ENCODE measurements at regions of chr11 and their contacts with region 1.

Region 1: GRCh38 chr11:126268708-126269579 is at the starts of genes FOXRED1 and SRPRA:
- DNase-seq: peak; percentile 96
- ATAC-seq: peak; percentile 96
- H3K4me3 ChIP-seq: peak within 1 kb of the TSS; percentile 93 to 100 (median 99)
- H3K27ac ChIP-seq: peak within 1 kb of the TSS; percentile 94
- H3K4me1 ChIP-seq: peaks cover 35% of the 10 kb centered on the region
- H3K27me3 ChIP-seq: no peaks in the 10 kb centered on the region; a peak in 1 of 5 replicates
- CTCF ChIP-seq: no peak
- EP300 ChIP-seq: peak in 1 of 2 experiments; percentile 46; a peak in 1 of 4 replicates
- POLR2A ChIP-seq: peak; percentile 81 to 86
- RAD21 ChIP-seq: no peak
- total RNA-seq, gene FOXRED1: 42.9 and 50.2 TPM in 2 replicates
- total RNA-seq, gene SRPRA: 16.4 and 27.7 TPM in 2 replicates

Region 2: DNA sequence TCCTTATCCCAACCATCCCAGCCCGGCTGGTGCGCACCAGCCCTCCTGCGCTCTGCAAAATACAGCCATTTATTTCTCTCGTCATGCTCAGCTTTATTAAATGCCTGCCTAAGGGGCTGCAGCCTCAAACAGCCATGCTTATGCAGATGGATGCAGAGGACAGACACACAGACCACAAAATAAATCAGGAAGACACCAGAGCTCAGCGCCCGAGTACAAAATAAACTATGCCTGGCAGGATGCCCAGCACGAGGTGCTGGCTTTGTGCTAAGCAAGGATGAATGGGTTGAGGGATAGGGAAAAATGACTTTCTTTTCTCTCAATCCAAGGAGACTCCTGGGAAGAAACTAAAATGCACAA is 128.0 kb before region 1 on chr11:
- CTCF ChIA-PET with region 1: no interaction called
- POLR2A ChIA-PET with region 1: no interaction called
- in situ Hi-C with region 1: no loop called
- intact Hi-C with region 1: no loop called
- DNase-seq: no peak
- ATAC-seq: no peak
- H3K4me3 ChIP-seq: no peak overlapping the region
- H3K27ac ChIP-seq: no peak overlapping the region
- H3K4me1 ChIP-seq: peaks cover 62% of the 10 kb centered on the region
- H3K27me3 ChIP-seq: peaks cover 0 to 7% of the 10 kb centered on the region in 2 experiments; a peak in 1 of 5 replicates
- CTCF ChIP-seq: no peak
- EP300 ChIP-seq: no peak
- POLR2A ChIP-seq: no peak
- RAD21 ChIP-seq: no peak

Region 3: DNA sequence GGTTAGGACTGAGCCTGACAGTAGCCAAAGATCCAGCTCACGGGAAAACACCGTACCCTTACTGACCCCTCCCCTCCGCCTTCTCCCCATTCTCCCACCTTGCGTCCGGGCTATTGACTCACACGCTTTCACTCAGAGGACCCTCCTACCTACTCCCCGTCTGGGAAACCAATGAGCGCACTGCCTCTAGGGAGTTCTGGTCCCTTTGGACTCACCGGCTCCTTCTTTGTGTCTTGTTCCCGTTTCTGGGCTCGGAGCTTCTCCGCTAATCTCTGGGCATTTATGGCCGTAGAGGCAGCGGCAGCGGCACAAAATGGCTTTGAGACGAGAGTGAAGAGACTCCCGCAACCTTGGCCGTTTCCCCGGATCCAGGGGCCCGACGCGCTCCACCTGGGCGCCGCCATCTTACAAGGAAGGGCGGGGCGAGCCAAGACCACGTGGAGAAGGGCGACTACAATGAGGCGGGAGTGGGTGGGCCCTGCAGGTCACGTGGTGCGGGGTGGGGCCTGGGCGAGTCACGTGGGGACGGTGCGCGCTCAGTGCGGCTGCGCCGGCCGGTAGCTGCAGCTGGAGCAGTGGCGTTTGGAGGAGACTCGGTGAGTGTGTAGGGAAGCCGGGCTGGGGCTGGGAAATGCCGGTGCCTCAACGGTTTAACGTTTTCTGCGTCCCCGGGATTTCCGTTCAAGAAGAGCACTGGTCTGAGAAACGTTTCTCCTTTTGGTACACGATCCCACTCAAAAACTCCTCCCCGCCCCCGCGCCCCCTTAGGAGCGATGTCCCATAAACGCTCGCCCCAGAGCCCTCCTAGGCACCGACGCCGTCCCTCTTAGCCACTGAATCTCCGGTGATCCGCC is 57.5 kb before region 1 on chr11 and contains the starts of genes FAM118B and RPUSD4:
- CTCF ChIA-PET with region 1: no interaction called
- POLR2A ChIA-PET with region 1: interaction called, 8 read pairs
- in situ Hi-C with region 1: no loop called
- intact Hi-C with region 1: loop called (anchors 2 kb)
- DNase-seq: peak; percentile 90
- ATAC-seq: peak; percentile 93
- H3K4me3 ChIP-seq: peak within 1 kb of the TSS; percentile 76 to 97 (median 90)
- H3K27ac ChIP-seq: peak within 1 kb of the TSS; percentile 82
- H3K4me1 ChIP-seq: peaks cover 42% of the 10 kb centered on the region
- H3K27me3 ChIP-seq: peaks cover 0 to 2% of the 10 kb centered on the region in 2 experiments; a peak in 1 of 5 replicates
- CTCF ChIP-seq: peak; percentile 26; the same call in 1 of the 2 replicates
- EP300 ChIP-seq: no peak
- POLR2A ChIP-seq: peak; percentile 87 to 91
- RAD21 ChIP-seq: 0 out of 2 replicates have a peak, but pooled peaks have one; percentile 6
- total RNA-seq, gene FAM118B: 25.7 and 30.9 TPM in 2 replicates
- total RNA-seq, gene RPUSD4: 45.0 and 45.6 TPM in 2 replicates

Region 4: DNA sequence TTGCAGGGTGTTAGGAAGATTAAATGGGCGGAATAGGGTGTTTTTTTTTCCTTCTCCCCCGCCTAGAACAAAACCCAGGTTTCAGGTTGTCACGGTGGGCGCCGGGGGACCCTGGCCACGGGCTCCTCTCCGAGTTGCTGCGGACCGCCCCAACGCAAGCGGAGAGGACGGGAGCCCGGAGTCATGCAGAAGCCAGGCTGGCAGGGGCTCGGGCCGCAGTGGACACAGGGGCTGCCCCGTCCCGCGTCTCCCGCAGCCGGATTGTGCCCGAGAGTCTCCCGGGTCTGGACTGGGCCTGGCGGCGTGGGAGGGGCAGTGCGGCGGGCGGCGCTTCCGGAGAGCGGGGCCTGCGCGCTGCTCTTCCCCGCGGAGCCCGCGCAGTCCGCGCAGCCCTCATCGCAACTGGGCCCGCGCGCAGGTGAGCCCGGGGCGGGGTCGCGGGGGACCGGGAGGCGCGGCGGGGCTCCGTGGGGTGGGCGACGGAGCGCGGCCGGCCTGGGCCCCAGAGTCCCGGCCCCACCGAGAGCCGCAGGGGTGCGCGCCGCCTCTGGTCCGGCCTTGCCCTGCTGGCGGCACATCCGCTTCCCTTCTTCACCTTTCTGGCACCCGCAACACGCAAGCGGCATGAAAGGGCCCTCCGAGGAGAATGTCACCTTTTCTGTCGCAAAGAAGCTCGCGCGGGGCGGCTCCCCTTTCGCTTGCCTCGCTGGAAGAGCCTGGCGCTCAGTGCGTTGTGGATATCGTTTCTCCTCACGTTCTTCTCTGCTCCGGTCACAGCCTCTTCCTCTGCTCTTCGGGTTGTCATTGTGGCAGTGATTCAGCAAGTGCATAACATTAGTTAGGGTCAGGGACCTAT is 14.0 kb after region 1 on chr11 and contains the start of gene TIRAP:
- CTCF ChIA-PET with region 1: no interaction called
- POLR2A ChIA-PET with region 1: interaction called, 19 read pairs
- in situ Hi-C with region 1: no loop called
- intact Hi-C with region 1: loop called (anchors 2 kb)
- DNase-seq: peak; percentile 43
- ATAC-seq: peak; percentile 88
- H3K4me3 ChIP-seq: peak within 1 kb of the TSS; percentile 87 to 96 (median 95)
- H3K27ac ChIP-seq: peak within 1 kb of the TSS; percentile 85
- H3K4me1 ChIP-seq: peaks cover 37% of the 10 kb centered on the region
- H3K27me3 ChIP-seq: no peaks in the 10 kb centered on the region
- CTCF ChIP-seq: no peak; the same call in 1 of the 2 replicates
- EP300 ChIP-seq: no peak
- POLR2A ChIP-seq: peak; percentile 33 to 93; a peak in 3 of 4 replicates
- RAD21 ChIP-seq: no peak
- total RNA-seq, gene TIRAP: 5.4 and 6.2 TPM in 2 replicates